ENCODE measurements at regions of chr16 and their contacts with region 1.

Region 1: GRCh38 chr16:74275002-74275636 is 21.5 kb upstream of the PSMD7 start:
- DNase-seq: peak; percentile 46
- H3K4me3 ChIP-seq: no peak overlapping the region; a peak in 1 of 4 replicates
- H3K27ac ChIP-seq: no peak overlapping the region
- H3K4me1 ChIP-seq: no peaks in the 10 kb centered on the region
- H3K27me3 ChIP-seq: no peaks in the 10 kb centered on the region
- CTCF ChIP-seq: peak; percentile 72
- EP300 ChIP-seq: no peak
- RAD21 ChIP-seq: peak; percentile 85

Region 2: GRCh38 chr16:74064120-74064735 is 210.9 kb before region 1 on chr16:
- CTCF ChIA-PET with region 1: interaction called, 77 read pairs
- POLR2A ChIA-PET with region 1: no interaction called
- DNase-seq: peak; percentile 55
- H3K4me3 ChIP-seq: no peak overlapping the region
- H3K27ac ChIP-seq: no peak overlapping the region
- H3K4me1 ChIP-seq: no peaks in the 10 kb centered on the region; a peak in 1 of 4 replicates
- H3K27me3 ChIP-seq: no peaks in the 10 kb centered on the region
- CTCF ChIP-seq: no peak; the same call in 1 of the 2 replicates
- EP300 ChIP-seq: no peak
- RAD21 ChIP-seq: peak; percentile 80

Region 3: DNA sequence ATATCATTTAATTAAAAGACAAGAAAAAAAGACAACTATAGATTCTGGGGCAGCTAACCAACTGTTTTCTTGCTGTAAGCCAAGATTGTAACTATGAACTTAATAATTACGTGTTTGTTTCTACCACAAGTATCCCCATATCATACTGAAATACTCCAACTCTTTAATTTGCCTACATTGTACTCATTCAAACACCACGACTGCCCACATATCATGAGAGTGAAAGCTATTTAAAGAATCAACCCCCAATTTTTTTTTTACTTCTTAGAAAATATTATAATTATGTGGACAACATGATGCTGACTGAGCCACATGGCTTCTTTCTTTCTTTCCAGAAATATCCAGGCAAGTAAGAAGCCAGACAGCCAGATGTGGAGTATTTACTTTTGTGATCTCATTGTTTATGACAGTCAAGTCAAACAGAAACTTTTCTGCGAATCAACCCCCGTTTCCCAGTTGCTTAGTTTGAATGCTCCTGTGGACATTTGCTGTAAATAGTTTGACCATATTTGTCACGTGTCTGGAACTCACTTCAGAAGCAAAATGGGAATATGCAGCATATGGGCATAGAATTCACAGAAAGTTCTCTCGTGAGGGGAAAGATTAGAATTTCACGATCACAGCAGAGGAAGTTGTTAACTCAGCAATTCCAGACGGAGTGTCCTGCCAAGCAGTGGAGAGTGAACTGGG is 105.3 kb before region 1 on chr16:
- CTCF ChIA-PET with region 1: no interaction called
- POLR2A ChIA-PET with region 1: no interaction called
- DNase-seq: no peak
- H3K4me3 ChIP-seq: no peak overlapping the region
- H3K27ac ChIP-seq: no peak overlapping the region
- H3K4me1 ChIP-seq: no peaks in the 10 kb centered on the region
- H3K27me3 ChIP-seq: no peaks in the 10 kb centered on the region
- CTCF ChIP-seq: no peak
- EP300 ChIP-seq: no peak
- RAD21 ChIP-seq: no peak

Region 4: DNA sequence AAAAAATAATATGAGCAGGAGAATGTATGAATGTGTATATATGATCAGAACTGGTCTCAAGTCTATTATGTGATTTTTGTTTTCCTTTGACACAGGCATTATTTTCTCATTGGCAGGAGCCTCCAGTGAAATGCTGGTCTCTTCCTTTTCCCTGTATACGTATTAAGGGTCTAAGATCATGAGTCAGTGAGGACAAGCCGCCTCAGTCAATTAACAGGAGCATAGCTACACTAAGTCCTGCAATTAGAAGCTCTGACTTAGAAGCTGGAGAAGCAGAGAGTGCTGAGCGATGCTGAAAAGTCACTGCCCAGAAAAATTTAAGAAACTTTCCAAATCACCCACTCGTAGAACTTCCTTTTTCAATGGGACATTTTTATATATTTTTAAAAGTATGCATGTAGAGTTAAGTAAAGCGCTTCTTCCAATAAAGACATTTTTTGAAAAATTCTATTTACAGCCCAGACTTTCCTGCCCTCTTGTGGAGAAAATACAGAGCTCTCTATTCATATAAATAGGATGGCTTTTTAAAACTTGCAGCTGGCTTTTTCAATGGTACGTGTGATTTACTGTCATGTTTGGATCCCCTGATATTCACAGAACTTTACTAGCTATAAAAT is 48.7 kb before region 1 on chr16:
- CTCF ChIA-PET with region 1: interaction called, 65 read pairs
- POLR2A ChIA-PET with region 1: no interaction called
- DNase-seq: peak; percentile 37
- H3K4me3 ChIP-seq: no peak overlapping the region
- H3K27ac ChIP-seq: no peak overlapping the region
- H3K4me1 ChIP-seq: no peaks in the 10 kb centered on the region
- H3K27me3 ChIP-seq: no peaks in the 10 kb centered on the region
- CTCF ChIP-seq: peak; percentile 59
- EP300 ChIP-seq: no peak
- RAD21 ChIP-seq: peak; percentile 83

Region 5: GRCh38 chr16:74257061-74257460 is 18.1 kb before region 1 on chr16:
- CTCF ChIA-PET with region 1: interaction called, 17 read pairs
- POLR2A ChIA-PET with region 1: no interaction called
- DNase-seq: no peak
- H3K4me3 ChIP-seq: no peak overlapping the region
- H3K27ac ChIP-seq: no peak overlapping the region
- H3K4me1 ChIP-seq: no peaks in the 10 kb centered on the region
- H3K27me3 ChIP-seq: no peaks in the 10 kb centered on the region
- CTCF ChIP-seq: no peak
- EP300 ChIP-seq: no peak
- RAD21 ChIP-seq: no peak

Region 6: GRCh38 chr16:74695450-74696422 is 420.6 kb after region 1 on chr16:
- CTCF ChIA-PET with region 1: no interaction called
- POLR2A ChIA-PET with region 1: no interaction called
- DNase-seq: peak; percentile 94
- H3K4me3 ChIP-seq: peak overlapping the region; percentile 50 to 55
- H3K27ac ChIP-seq: peak overlapping the region in 1 of 2 experiments; percentile 39; a peak in 1 of 4 replicates
- H3K4me1 ChIP-seq: no peaks in the 10 kb centered on the region; a peak in 1 of 4 replicates
- H3K27me3 ChIP-seq: no peaks in the 10 kb centered on the region
- CTCF ChIP-seq: no peak
- EP300 ChIP-seq: no peak
- RAD21 ChIP-seq: no peak